ENCODE measurements at regions of chr3 and their contacts with region 1.

Region 1: DNA sequence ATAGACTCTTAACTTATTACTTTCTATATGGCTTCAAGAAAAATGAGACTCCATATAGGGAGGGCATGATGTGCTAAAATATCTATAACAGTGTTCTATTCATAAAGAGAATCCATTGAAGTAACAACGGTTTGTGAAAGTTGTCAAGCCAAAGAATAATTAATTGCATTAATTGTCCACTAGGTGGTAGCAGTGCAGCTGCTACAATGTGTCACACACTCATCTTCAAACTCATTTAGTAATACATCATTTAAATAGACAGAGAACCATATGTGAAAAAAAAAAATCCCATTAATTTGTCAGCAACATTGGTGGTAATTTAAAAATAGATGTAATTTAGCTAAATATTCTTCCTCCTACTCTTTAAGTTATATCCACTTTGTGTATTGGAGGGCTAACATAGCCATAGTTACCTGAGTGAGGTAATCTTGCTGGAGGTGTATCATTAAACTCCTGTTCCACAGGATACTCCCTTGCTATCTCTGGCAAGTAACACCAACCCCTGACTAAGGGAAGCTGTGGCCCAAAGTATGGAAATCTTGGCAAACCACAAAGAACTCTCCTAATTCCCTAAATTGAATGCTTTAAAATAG is 3.7 kb upstream of the CPA3 start:
- DNase-seq: peak; percentile 49
- CTCF ChIP-seq: peak; percentile 62

Region 2: GRCh38 chr3:148842334-148842733 is 19.0 kb before region 1 on chr3:
- CTCF ChIA-PET with region 1: interaction called, 46 read pairs
- POLR2A ChIA-PET with region 1: no interaction called
- DNase-seq: no peak
- CTCF ChIP-seq: no peak

Region 3: GRCh38 chr3:148873270-148873926 is 12.0 kb after region 1 on chr3:
- CTCF ChIA-PET with region 1: interaction called, 16 read pairs
- POLR2A ChIA-PET with region 1: interaction called, 4 read pairs
- DNase-seq: no peak
- CTCF ChIP-seq: no peak

Region 4: GRCh38 chr3:148930752-148931151 is 69.4 kb after region 1 on chr3:
- CTCF ChIA-PET with region 1: interaction called, 16 read pairs
- POLR2A ChIA-PET with region 1: no interaction called
- DNase-seq: no peak
- CTCF ChIP-seq: no peak

Region 5: GRCh38 chr3:148948913-148949657 is 87.7 kb after region 1 on chr3:
- CTCF ChIA-PET with region 1: interaction called, 78 read pairs
- POLR2A ChIA-PET with region 1: no interaction called
- DNase-seq: no peak
- CTCF ChIP-seq: no peak

Region 6: DNA sequence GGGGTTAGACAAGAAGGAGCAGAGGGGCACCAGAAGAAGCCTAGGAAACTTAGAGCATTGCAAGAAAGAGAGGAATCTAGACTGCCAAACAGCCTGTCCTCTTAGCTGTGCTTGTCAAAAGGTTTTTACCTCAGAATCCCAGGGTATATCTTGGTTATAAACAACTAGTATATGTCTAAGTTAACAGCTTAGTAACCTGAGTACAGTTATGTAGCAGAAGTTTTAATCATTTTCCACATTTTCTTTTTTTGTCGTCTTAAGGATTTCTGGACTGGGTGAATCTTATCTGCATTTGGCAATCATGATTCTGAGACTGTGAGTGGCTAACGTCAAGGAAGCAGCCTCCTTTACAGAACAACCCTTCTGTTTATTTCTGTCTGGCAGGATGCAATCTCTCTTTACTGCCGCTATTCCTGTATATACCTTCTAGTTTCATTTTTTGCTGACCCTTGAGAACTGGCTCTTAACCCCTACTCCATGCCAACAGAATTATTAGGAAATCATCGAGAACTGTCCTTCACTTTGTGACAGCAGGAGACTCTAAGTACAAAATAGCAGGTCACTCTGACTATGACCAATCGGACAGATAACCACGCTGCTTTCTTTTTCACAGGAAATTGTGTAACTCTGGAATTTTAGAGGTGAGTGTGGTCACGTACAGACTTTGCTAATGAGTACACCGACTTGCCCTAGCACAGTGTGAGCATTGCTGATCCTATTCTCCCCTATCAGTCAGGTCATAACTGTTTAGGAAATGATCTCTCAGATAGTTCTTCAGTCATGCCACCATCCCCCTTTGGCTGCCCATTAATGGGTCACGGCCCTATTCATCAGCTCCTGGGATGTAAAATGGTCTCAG is 363.6 kb after region 1 on chr3:
- CTCF ChIA-PET with region 1: no interaction called
- POLR2A ChIA-PET with region 1: no interaction called
- DNase-seq: peak; percentile 67
- CTCF ChIP-seq: no peak